GM12878 (cell line): ENCODE measurements at regions of chr20 and their contacts with region 1.

Region 1: GRCh38 chr20:33915726-33916331 is 77.9 kb upstream of the RALY start:
- DNase-seq: no peak
- ATAC-seq: peak; percentile 83
- H3K4me3 ChIP-seq: no peak overlapping the region
- H3K27ac ChIP-seq: no peak overlapping the region
- H3K4me1 ChIP-seq: peaks cover 11% of the 10 kb centered on the region
- H3K27me3 ChIP-seq: no peaks in the 10 kb centered on the region
- CTCF ChIP-seq: peak; percentile 63 to 84 (median 70)
- EP300 ChIP-seq: no peak
- POLR2A ChIP-seq: no peak
- RAD21 ChIP-seq: peak; percentile 21; the same call in 1 of the 2 replicates

Region 2: GRCh38 chr20:33984182-33984719 is 68.4 kb after region 1 on chr20:
- CTCF ChIA-PET with region 1: no interaction called
- POLR2A ChIA-PET with region 1: no interaction called
- RAD21 ChIA-PET with region 1: no interaction called
- SMC1A ChIA-PET with region 1: no interaction called
- in situ Hi-C with region 1: no loop called
- intact Hi-C with region 1: no loop called
- DNase-seq: no peak
- ATAC-seq: no peak
- H3K4me3 ChIP-seq: no peak overlapping the region
- H3K27ac ChIP-seq: no peak overlapping the region
- H3K4me1 ChIP-seq: no peaks in the 10 kb centered on the region
- H3K27me3 ChIP-seq: peaks cover 0 to 2% of the 10 kb centered on the region in 2 experiments; a peak in 2 of 4 replicates
- CTCF ChIP-seq: no peak
- EP300 ChIP-seq: no peak
- POLR2A ChIP-seq: no peak
- RAD21 ChIP-seq: no peak

Region 3: GRCh38 chr20:34022154-34022838 is 106.5 kb after region 1 on chr20:
- CTCF ChIA-PET with region 1: interaction called, 38 read pairs
- POLR2A ChIA-PET with region 1: no interaction called
- RAD21 ChIA-PET with region 1: interaction called, 9 read pairs
- SMC1A ChIA-PET with region 1: interaction called, 6 read pairs
- in situ Hi-C with region 1: no loop called
- intact Hi-C with region 1: loop called (anchors 5 kb)
- DNase-seq: peak; percentile 63
- ATAC-seq: peak; percentile 88
- H3K4me3 ChIP-seq: no peak overlapping the region
- H3K27ac ChIP-seq: peak overlapping the region; percentile 63
- H3K4me1 ChIP-seq: peaks cover 20% of the 10 kb centered on the region
- H3K27me3 ChIP-seq: no peaks in the 10 kb centered on the region
- CTCF ChIP-seq: peak; percentile 44 to 54 (median 48)
- EP300 ChIP-seq: 0 out of 4 replicates have a peak, but pooled peaks of 1 of the 2 experiments have one; percentile 10
- POLR2A ChIP-seq: no peak
- RAD21 ChIP-seq: peak; percentile 70

Region 4: DNA sequence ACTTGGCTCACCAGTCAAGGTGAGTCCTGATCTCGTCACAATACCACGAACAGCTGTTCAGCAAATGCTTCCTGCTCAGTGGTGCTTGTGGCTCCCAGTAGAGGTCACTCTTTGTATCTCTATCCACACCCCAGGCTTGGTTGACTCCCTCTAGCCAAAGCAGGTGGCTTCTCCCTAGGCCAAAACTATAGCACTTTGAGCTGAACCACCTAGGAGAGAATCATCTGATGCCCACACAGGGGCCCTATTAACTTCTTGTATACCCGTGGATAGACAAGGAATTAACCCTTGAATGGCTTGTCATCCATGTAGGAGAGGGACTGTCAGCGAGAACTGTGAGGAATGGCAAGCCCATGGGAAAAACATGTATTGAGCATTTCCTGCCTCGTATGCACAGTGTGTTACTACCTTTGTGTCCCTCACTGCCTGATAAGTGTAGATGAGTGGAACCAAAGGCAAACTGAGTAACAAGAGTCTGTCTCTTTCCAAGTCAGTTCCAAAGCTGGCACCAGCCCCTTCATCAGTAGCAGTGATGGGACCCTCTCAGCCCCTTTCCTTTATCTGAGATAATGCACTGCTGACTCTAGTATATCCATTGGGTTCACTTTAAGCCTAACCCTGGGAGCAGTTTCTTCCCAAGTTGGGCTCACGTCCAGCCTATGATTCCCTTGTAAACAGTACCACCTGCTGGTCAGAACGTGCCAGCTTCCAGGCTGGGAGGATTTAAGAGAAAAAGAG is 153.7 kb after region 1 on chr20:
- CTCF ChIA-PET with region 1: interaction called, 30 read pairs
- POLR2A ChIA-PET with region 1: no interaction called
- RAD21 ChIA-PET with region 1: interaction called, 3 read pairs
- SMC1A ChIA-PET with region 1: interaction called, 9 read pairs
- in situ Hi-C with region 1: no loop called
- intact Hi-C with region 1: no loop called
- DNase-seq: peak; percentile 30
- ATAC-seq: peak; percentile 97
- H3K4me3 ChIP-seq: no peak overlapping the region
- H3K27ac ChIP-seq: no peak overlapping the region
- H3K4me1 ChIP-seq: no peaks in the 10 kb centered on the region
- H3K27me3 ChIP-seq: no peaks in the 10 kb centered on the region
- CTCF ChIP-seq: peak; percentile 76 to 86 (median 78)
- EP300 ChIP-seq: no peak
- POLR2A ChIP-seq: no peak
- RAD21 ChIP-seq: peak; percentile 91